Calu3 (cell line): ENCODE measurements at regions of chr9 and their contacts with region 1.

Region 1: DNA sequence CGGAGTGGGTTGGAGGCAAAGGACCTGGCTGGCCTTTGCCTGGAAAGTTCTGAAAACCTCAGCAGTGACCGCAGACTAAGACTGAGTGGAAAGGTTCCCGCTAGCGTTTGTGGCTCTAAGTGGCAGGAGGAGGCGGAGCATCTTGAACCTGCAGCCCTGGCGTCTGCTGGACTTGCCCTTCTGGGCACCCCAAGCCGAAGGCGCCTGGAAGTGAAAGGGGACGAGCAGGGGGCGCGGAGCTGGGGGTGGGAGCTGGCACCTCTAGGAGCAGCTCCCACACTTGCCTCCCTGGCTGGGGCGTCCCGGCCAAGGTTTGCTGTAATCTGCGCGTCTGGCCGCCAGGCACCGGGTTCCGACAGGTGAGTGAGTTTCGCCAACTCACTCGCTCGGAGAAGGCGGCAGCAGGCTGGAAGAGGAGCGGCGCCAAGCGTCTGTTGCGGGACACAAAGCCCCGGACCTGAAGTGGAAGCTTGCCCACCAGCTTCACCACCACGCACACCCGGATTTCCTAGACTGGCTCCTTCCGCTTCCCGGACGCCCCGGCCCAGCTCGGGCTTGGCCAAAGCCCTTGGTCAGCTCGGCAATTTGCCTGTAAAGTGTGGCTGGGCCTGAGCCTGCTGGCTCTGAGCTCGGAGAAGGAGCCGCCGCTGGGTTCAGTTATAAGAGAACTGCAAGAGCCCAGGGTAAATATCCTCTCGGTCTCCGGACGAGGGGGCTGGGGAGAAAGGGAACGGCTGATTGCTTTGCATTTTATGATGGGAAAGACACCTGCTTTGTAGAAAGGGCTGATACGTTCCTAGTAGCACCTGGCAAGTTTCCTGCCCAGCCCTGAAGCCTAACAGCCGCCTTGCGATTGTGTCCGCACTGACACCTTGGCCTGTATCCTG is at the start of gene GNA14:
- DNase-seq: peak; percentile 62
- H3K4me3 Mint-ChIP-seq: peak within 1 kb of the TSS; percentile 77
- H3K27ac Mint-ChIP-seq: no peak within 1 kb of the TSS
- H3K4me1 Mint-ChIP-seq: no peaks in the 10 kb centered on the region
- H3K27me3 Mint-ChIP-seq: peaks cover 20% of the 10 kb centered on the region
- CTCF ChIP-seq: no peak
- total RNA-seq, gene GNA14: 0.15 TPM in 1 of 2 replicates, not detected in the other

Region 2: DNA sequence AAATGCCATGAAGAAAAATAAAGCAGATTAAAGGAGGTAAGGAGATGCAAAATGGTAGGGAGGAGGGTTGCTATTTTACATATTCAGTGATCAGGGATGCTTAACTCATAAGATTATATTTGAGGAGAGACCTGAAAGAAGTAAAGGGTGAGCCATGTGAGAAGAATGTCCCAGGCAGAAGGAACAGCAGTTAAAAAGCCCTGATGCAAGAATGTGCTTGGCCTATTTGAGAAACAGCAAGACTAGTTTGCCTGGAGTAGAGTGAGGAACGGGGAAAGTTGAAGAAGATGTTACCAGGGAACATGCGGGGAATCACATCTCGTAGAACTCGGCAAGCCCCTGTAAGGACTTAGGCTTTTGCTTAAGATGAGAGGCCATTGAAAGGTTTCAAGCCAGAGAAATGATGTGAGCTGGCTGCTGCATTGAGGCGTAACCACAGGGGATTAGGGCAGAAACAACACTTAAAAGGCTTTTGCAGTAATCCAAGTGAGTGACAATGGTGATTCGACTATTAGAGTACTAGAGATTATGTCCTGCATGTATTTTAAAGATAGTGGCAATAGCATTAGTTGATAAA is 272.4 kb before region 1 on chr9:
- CTCF ChIA-PET with region 1: no interaction called
- intact Hi-C with region 1: no loop called
- DNase-seq: no peak
- H3K4me3 Mint-ChIP-seq: no peak overlapping the region
- H3K27ac Mint-ChIP-seq: no peak overlapping the region
- H3K4me1 Mint-ChIP-seq: no peaks in the 10 kb centered on the region
- H3K27me3 Mint-ChIP-seq: no peaks in the 10 kb centered on the region
- CTCF ChIP-seq: no peak

Region 3: GRCh38 chr9:77456829-77457437 is 191.5 kb before region 1 on chr9:
- CTCF ChIA-PET with region 1: interaction called, 3 read pairs
- intact Hi-C with region 1: loop called (anchors 5 kb)
- DNase-seq: peak; percentile 80
- H3K4me3 Mint-ChIP-seq: no peak overlapping the region
- H3K27ac Mint-ChIP-seq: no peak overlapping the region
- H3K4me1 Mint-ChIP-seq: peaks cover 8% of the 10 kb centered on the region
- H3K27me3 Mint-ChIP-seq: peaks cover 28% of the 10 kb centered on the region
- CTCF ChIP-seq: peak; percentile 49

Region 4: GRCh38 chr9:77569173-77569734 is 79.2 kb before region 1 on chr9:
- CTCF ChIA-PET with region 1: no interaction called
- intact Hi-C with region 1: loop called (anchors 5 kb)
- DNase-seq: no peak
- H3K4me3 Mint-ChIP-seq: no peak overlapping the region
- H3K27ac Mint-ChIP-seq: no peak overlapping the region
- H3K4me1 Mint-ChIP-seq: no peaks in the 10 kb centered on the region
- H3K27me3 Mint-ChIP-seq: no peaks in the 10 kb centered on the region
- CTCF ChIP-seq: no peak

Region 5: DNA sequence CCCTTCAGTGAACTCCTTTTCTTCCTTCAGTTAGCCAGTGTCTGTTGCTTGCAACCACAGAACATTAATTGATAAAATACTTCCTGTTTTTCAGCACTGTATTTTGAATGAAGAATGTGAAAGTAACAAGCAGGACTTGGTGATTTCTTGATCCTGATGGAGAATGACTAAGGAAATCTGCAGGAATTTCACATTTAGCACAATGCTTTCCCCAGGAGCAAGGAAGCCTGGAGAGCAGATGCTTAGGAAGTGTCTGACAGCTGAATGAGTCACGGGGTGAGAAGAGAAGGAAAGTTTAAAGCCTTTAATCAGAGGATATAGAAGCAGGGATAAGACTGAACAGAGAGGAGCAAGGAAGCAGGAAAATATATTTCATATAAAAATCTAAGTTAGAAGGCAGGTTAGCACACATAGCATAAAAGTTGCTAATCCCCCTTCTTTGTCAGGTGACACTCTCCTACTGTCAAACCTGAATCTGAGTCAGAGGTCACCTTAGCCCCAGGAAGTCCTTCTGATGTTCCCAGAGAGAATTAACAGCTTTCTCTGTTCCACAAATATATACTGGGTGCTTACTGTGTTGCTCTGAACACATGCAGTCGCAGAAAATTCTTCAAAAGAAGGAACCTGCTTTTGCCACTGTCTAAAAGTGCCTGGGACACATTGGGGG is 60.1 kb before region 1 on chr9:
- CTCF ChIA-PET with region 1: interaction called, 5 read pairs
- intact Hi-C with region 1: loop called (anchors 5 kb)
- DNase-seq: peak; percentile 1
- H3K4me3 Mint-ChIP-seq: peak overlapping the region; percentile 8
- H3K27ac Mint-ChIP-seq: peak overlapping the region; percentile 60
- H3K4me1 Mint-ChIP-seq: peaks cover 26% of the 10 kb centered on the region
- H3K27me3 Mint-ChIP-seq: no peaks in the 10 kb centered on the region
- CTCF ChIP-seq: no peak

Region 6: DNA sequence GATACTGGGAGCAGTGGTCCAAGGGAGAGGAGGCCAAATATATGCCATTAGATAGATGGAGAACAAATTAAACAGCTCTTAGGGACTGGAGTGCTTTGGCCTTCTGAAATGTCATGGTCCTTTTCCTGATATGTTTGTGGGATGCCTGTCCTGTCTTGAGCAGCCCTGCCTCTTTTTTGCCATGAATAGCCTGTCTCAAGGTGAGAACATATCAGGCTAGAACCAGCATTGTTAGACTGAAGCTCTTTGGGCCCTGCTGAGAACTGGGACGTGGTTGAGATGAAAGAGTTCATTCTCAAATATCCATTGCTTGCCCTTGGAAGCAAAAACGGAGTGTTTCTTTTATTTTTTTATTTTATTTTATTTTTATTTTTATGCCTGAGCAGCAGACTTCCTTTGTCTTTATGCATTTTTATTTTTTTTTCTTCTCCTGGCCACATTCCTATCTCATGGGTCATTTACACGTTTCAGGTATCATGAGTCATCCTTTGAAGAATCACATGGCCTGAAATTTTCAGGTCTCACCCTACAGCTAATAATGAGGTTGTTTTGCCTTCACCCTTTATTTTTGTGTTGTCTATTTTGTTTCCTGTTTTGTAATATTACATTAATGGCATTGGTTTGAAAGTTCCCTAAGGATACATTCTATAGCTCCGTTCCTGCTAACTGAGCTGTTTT is 1019.8 kb after region 1 on chr9:
- CTCF ChIA-PET with region 1: no interaction called
- intact Hi-C with region 1: no loop called
- DNase-seq: no peak
- H3K4me3 Mint-ChIP-seq: no peak overlapping the region
- H3K27ac Mint-ChIP-seq: peak overlapping the region; percentile 40
- H3K4me1 Mint-ChIP-seq: no peaks in the 10 kb centered on the region
- H3K27me3 Mint-ChIP-seq: no peaks in the 10 kb centered on the region
- CTCF ChIP-seq: no peak